ENCODE measurements at regions of chr18 and their contacts with region 1.

Region 1: GRCh38 chr18:50614838-50615237 is 55.0 kb downstream of the MAPK4 start:
- DNase-seq: peak; percentile 98
- ATAC-seq: peak; percentile 99
- H3K4me3 ChIP-seq: no peak overlapping the region
- H3K27ac ChIP-seq: peak overlapping the region; percentile 58
- H3K4me1 ChIP-seq: peaks cover 46% of the 10 kb centered on the region
- H3K27me3 ChIP-seq: no peaks in the 10 kb centered on the region
- CTCF ChIP-seq: 0 out of 2 replicates have a peak, but pooled peaks have one; percentile 11
- EP300 ChIP-seq: peak; percentile 89 to 92; a peak in 3 of 4 replicates
- POLR2A ChIP-seq: 0 out of 4 replicates have a peak, but pooled peaks of 1 of the 2 experiments have one; percentile 32
- RAD21 ChIP-seq: no peak

Region 2: GRCh38 chr18:50079581-50080295 is 535.1 kb before region 1 on chr18:
- CTCF ChIA-PET with region 1: no interaction called
- POLR2A ChIA-PET with region 1: no interaction called
- in situ Hi-C with region 1: no loop called
- intact Hi-C with region 1: loop called (anchors 5 kb)
- DNase-seq: no peak
- ATAC-seq: no peak
- H3K4me3 ChIP-seq: no peak overlapping the region
- H3K27ac ChIP-seq: no peak overlapping the region
- H3K4me1 ChIP-seq: peaks cover 49% of the 10 kb centered on the region
- H3K27me3 ChIP-seq: no peaks in the 10 kb centered on the region
- CTCF ChIP-seq: no peak
- EP300 ChIP-seq: no peak
- POLR2A ChIP-seq: no peak
- RAD21 ChIP-seq: no peak

Region 3: GRCh38 chr18:50696929-50697328 is 82.1 kb after region 1 on chr18:
- CTCF ChIA-PET with region 1: no interaction called
- POLR2A ChIA-PET with region 1: no interaction called
- in situ Hi-C with region 1: no loop called
- intact Hi-C with region 1: no loop called
- DNase-seq: no peak
- ATAC-seq: no peak
- H3K4me3 ChIP-seq: no peak overlapping the region
- H3K27ac ChIP-seq: no peak overlapping the region
- H3K4me1 ChIP-seq: no peaks in the 10 kb centered on the region
- H3K27me3 ChIP-seq: peaks cover 0 to 1% of the 10 kb centered on the region in 2 experiments; a peak in 1 of 5 replicates
- CTCF ChIP-seq: no peak
- EP300 ChIP-seq: no peak
- POLR2A ChIP-seq: no peak
- RAD21 ChIP-seq: no peak

Measured in HepG2 (cell line).